Posterior cingulate gyrus (tissue), 11 donors: ENCODE measurements at regions of chr4 and their contacts with region 1.

Region 1: GRCh38 chr4:148441986-148442831 is at the start of gene NR3C2:
- DNase-seq: peak; percentile 99 to 100 (median 100)

Region 2: GRCh38 chr4:148216866-148217814 is 225.1 kb before region 1 on chr4:
- intact Hi-C with region 1: loop called (anchors 10 kb)
- DNase-seq: no peak

Region 3: DNA sequence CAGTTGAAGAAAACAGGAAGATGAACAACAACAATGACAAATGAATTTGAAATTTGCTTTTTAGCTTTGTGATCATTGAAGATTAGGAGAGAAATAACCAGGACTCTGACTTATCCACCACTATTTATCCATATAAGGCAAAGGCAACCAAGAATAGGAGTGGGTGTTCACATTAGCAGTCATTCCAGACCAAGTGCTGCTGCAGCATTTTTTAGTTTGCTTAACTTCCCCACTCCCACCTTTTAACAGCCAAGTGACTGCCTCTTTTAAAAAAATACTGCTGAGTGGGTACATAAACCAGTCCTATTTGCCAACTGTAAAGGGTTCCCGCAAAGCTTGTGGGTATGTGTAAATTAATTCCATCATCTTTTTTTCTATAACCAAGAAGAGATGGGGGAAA is 1142.5 kb after region 1 on chr4:
- intact Hi-C with region 1: no loop called
- DNase-seq: no peak